ENCODE measurements at regions of chr4 and their contacts with region 1.

Region 1: GRCh38 chr4:57190601-57191481 is 80.7 kb upstream of the IGFBP7 start:
- H3K4me3 ChIP-seq: no peak overlapping the region
- H3K27ac ChIP-seq: peak overlapping the region; percentile 44; the same call in 1 of the 2 replicates
- H3K4me1 ChIP-seq: peaks cover 6% of the 10 kb centered on the region; the same call in 1 of the 2 replicates
- CTCF ChIP-seq: no peak

Region 2: GRCh38 chr4:57168982-57169381 is 21.9 kb before region 1 on chr4:
- CTCF ChIA-PET with region 1: interaction called, 32 read pairs
- POLR2A ChIA-PET with region 1: no interaction called
- H3K4me3 ChIP-seq: no peak overlapping the region
- H3K27ac ChIP-seq: no peak overlapping the region
- H3K4me1 ChIP-seq: no peaks in the 10 kb centered on the region; the same call in 1 of the 2 replicates
- CTCF ChIP-seq: no peak

Region 3: DNA sequence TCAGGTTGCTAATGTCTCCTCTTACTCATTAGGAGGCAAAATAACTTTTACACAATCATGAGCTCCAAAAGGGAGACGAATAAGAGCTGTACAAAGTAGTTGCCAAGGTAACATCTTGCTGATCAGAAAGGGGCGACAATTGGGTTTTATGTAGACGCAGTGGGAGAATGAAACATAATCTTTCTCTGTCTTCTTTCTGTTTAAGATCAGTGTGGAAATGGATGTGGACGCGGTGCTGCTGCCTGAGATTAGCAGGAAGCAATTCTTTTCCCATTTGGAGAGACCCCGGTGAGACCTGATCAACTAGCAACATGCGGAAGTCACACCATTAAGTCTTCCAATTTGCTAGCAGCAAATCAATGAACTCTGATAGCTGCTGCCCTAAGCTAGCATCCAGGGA is 10.1 kb after region 1 on chr4:
- CTCF ChIA-PET with region 1: interaction called, 16 read pairs
- POLR2A ChIA-PET with region 1: no interaction called
- H3K4me3 ChIP-seq: no peak overlapping the region
- H3K27ac ChIP-seq: no peak overlapping the region
- H3K4me1 ChIP-seq: no peaks in the 10 kb centered on the region
- CTCF ChIP-seq: no peak

Measured in HEK293 (cell line).